Right ventricle myocardium superior (tissue), 1 donor: ENCODE measurements at regions of chr3 and their contacts with region 1.

Region 1: GRCh38 chr3:188954590-188955208 is 217.1 kb upstream of the TPRG1 start:
- DNase-seq: peak; percentile 86
- ATAC-seq: peak; percentile 86

Region 2: DNA sequence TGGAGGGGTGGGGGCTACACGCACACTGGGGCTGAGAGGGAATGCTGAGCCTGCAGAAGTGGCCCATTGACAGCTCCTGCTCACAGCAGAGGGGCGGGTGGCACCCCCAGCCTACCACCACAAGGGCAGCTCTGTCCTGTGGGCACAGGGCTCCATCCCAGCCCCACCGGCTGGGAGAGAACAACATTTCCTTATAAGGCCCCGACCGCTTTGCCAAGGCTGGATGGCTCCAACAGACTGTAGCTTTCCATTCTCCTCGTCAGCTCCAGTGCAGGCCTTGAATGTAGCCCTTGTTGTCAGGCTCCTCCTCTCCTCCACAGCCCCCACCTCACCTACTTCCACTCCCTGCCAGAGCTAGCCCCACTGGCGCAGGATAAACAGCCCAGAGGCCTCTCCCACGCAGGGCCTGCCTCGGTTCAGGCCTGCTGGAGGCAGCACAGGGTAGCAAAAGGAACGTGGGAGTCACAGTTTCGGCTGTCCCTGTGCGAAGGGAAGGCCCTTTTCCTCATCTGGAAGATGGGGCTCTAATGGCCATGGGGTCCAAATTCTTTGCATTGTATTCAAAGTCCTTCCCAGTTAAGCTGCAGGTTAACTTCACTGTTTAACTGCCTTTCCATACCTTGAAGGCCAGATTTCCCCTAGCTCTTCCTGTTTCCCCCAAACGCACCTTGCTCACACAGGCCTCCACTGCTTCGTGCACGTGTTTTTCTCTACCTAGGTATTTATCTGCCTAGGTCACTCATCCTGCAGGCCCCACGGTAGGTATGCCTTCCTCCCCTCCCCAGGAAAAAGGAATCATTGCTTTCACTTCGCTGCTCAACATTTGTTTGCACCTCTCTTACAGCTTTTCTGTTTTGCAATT is 902.3 kb before region 1 on chr3:
- intact Hi-C with region 1: loop called (anchors 5 kb)
- DNase-seq: peak; percentile 90
- ATAC-seq: peak; percentile 95

Region 3: GRCh38 chr3:189148081-189148507 is 193.4 kb after region 1 on chr3:
- intact Hi-C with region 1: loop called (anchors 5 kb)
- DNase-seq: peak; percentile 57
- ATAC-seq: peak; percentile 81